Caco-2 (cell line): ENCODE measurements at regions of chr17 and their contacts with region 1.

Region 1: DNA sequence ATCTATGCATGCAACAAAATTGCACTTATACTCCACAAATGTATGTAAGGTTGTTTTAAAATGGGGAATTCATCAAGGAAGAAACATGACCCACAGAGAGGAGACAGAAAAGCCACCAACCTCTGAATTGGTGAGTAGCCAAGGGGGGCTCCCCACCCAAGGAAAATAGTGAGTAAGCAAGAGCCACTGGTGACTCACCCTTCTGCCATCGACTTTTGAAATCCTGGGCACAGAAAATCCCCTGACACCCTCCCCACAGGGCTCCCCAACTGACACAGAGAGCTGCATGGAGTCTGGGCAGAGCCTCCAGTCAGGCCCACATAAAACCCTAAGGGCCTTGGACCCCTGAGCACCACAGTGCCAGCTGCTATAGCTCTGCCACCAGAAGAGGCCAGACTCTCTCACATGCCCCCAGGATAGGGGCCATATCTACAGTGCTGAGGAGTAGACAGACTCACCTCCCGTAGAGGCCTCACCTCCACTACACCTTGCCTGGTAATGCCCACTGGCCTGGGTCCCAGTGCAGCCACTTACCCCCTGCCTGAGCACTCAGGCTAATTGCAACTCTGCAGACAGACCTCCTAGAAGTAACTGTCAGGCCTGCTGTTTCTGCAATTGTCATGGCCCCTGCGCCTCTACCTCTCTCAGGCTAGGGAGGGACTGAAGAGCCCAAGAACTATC is 244.7 kb upstream of the WSB1 start:
- DNase-seq: no peak
- H3K4me3 ChIP-seq: no peak overlapping the region
- H3K4me3 Mint-ChIP-seq: no peak overlapping the region
- H3K27ac Mint-ChIP-seq: no peak overlapping the region
- H3K4me1 ChIP-seq: no peaks in the 10 kb centered on the region; the same call in 1 of the 2 replicates
- H3K4me1 Mint-ChIP-seq: no peaks in the 10 kb centered on the region
- H3K27me3 ChIP-seq: no peaks in the 10 kb centered on the region
- H3K27me3 Mint-ChIP-seq: no peaks in the 10 kb centered on the region
- CTCF ChIP-seq: no peak

Region 2: DNA sequence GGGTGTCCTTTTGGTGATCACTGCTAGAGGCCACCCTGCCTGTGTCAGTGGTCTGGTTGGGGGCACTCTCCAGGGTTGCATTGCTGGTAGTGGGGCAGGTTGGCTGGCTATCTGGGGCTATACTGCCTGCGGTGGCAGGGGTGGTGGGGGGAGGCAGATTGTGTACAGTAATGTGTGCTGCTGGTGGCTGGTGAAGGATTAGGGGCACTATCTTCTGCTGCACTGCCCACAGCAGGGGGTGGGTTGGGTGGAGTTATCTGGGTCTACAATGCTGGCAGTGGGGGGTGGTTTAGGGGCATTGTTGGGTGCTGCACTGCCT is 40.6 kb after region 1 on chr17:
- CTCF ChIA-PET with region 1: no interaction called
- POLR2A ChIA-PET with region 1: no interaction called
- intact Hi-C with region 1: loop called (anchors 5 kb)
- DNase-seq: no peak
- H3K4me3 ChIP-seq: no peak overlapping the region
- H3K4me3 Mint-ChIP-seq: no peak overlapping the region
- H3K27ac Mint-ChIP-seq: no peak overlapping the region
- H3K4me1 ChIP-seq: no peaks in the 10 kb centered on the region
- H3K4me1 Mint-ChIP-seq: no peaks in the 10 kb centered on the region
- H3K27me3 ChIP-seq: no peaks in the 10 kb centered on the region
- H3K27me3 Mint-ChIP-seq: peaks cover 12% of the 10 kb centered on the region
- CTCF ChIP-seq: no peak

Region 3: GRCh38 chr17:27106347-27106981 is 57.2 kb after region 1 on chr17:
- CTCF ChIA-PET with region 1: no interaction called
- POLR2A ChIA-PET with region 1: no interaction called
- intact Hi-C with region 1: loop called (anchors 10 kb)
- DNase-seq: no peak
- H3K4me3 ChIP-seq: no peak overlapping the region
- H3K4me3 Mint-ChIP-seq: no peak overlapping the region
- H3K27ac Mint-ChIP-seq: no peak overlapping the region
- H3K4me1 ChIP-seq: peaks cover 6% of the 10 kb centered on the region; the same call in 1 of the 2 replicates
- H3K4me1 Mint-ChIP-seq: peaks cover 10% of the 10 kb centered on the region
- H3K27me3 ChIP-seq: no peaks in the 10 kb centered on the region
- H3K27me3 Mint-ChIP-seq: peaks cover 2% of the 10 kb centered on the region
- CTCF ChIP-seq: no peak